ENCODE measurements at regions of chr5 and their contacts with region 1.

Region 1: GRCh38 chr5:159262859-159263567 is at the start of gene UBLCP1:
- DNase-seq: peak; percentile 81
- ATAC-seq: peak; percentile 89
- H3K4me3 Mint-ChIP-seq: peak within 1 kb of the TSS; percentile 95
- H3K27ac Mint-ChIP-seq: peak within 1 kb of the TSS; percentile 97
- H3K4me1 Mint-ChIP-seq: peaks cover 19% of the 10 kb centered on the region
- H3K27me3 Mint-ChIP-seq: no peaks in the 10 kb centered on the region
- total RNA-seq, gene UBLCP1: 28.7 to 30.8 TPM

Region 2: DNA sequence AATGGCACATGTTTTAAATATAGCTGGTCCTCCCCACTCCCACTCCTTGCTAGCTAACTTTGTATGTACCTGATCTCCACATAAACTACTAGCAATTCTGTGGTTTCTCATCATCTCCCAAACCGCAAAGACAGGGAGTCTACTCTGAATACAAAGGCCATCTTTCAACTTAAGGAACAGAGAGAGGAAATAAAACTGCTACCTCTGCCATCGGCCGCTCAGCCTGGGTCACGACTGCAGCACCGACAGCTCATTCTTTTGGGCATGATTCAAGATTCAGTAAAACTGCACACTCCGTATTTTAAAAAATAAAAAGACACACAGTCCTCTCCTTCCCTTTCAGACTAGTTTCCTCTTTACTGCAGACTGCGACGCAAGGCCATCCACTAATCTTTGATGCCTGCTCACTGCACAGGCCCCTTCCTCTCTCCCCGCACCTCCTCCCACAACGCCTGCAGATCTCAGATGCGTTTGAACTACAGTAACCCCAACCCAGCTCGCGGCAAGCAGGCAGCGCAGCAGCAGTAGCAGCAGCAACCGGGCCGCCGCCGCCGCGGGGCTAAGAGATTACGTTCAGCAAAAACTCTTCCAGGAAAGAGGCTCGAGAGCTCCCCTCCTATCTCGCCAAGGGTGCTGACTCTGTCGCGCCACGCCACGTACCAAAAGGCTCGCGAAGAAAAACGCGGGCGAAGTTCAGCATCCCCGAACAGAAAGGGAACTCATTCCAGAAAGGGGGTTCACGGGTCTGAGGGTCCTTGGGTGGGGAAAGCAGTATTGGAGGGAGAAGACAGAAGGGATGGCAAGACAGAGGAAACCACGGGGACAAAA is 55.1 kb before region 1 on chr5:
- POLR2A ChIA-PET with region 1: interaction called, 14 read pairs
- DNase-seq: peak; percentile 79
- ATAC-seq: peak; percentile 60
- H3K4me3 Mint-ChIP-seq: peak overlapping the region; percentile 88
- H3K27ac Mint-ChIP-seq: peak overlapping the region; percentile 98
- H3K4me1 Mint-ChIP-seq: peaks cover 46% of the 10 kb centered on the region
- H3K27me3 Mint-ChIP-seq: no peaks in the 10 kb centered on the region

Measured in activated naive CD8-positive, alpha-beta T cell treated with anti-CD3 and anti-CD28 coated beads, Interleukin-2, amount 10 ng/mL, durations not matched to agents 7 days and 5 days (primary cell).